Activated T-helper 1 cell treated with anti-CD3 and anti-CD28 coated beads, Interleukin-12 subunit alpha, Interleukin-12 subunit beta, Interleukin-2, Interleukin-4 antibody, amounts not matched to agents 30 ng/mL and 10 ng/mL and 1 ng/mL, durations not matched to agents 14 hours and 24 hours and 36 hours (primary cell): ENCODE measurements at regions of chr19 and their contacts with region 1.

Region 1: GRCh38 chr19:57410877-57411671 is at the start of gene ZNF17:
- DNase-seq: peak; percentile 87
- H3K4me3 Mint-ChIP-seq: peak within 1 kb of the TSS; percentile 95
- H3K27ac Mint-ChIP-seq: peak within 1 kb of the TSS; percentile 81
- H3K4me1 Mint-ChIP-seq: peaks cover 18% of the 10 kb centered on the region
- H3K27me3 Mint-ChIP-seq: no peaks in the 10 kb centered on the region
- total RNA-seq, gene ZNF17: 7.9 and 11.0 TPM in 2 replicates

Region 2: DNA sequence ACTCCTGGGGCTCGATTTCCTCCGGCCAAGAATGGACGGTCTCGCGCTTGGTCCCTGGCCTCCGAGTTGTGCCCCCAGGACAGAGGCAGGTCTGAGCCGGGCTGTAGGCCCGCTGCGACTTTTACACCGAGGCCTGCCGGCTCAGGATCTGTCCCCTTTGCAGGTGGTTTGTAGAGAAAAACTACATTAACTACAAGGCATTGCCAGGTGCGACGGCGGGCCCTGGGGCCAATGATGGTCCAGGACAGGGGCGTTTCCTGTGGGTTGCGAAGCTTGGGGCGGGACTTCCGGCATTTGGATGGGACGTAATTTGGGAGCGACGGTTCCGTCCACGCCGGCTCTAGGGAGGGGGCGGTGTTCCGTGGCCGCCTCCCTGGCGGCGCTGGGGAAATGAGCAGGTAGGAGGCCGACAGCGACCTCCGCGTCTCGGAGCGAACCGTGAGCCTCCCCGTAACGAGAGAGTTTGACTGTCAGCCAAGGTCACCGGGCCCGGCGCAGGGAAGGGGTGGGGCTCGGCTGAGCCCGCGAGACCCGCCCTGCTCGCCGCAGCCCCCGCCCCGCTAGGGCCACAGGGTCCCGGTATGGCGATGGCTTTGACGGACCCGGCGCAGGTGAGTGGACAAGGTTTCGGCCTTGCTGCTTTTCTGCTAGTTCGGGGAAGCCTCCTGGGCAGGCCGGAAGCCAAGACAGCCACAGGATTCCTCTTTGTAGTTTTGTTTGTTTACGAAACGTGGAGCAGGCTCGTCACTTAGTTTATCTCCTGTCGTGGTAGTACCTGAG is 170.6 kb before region 1 on chr19 and contains the start of gene ZNF805:
- intact Hi-C with region 1: loop called (anchors 1 kb)
- DNase-seq: peak; percentile 93
- H3K4me3 Mint-ChIP-seq: peak within 1 kb of the TSS; percentile 92
- H3K27ac Mint-ChIP-seq: peak within 1 kb of the TSS; percentile 97
- H3K4me1 Mint-ChIP-seq: peaks cover 14% of the 10 kb centered on the region
- H3K27me3 Mint-ChIP-seq: no peaks in the 10 kb centered on the region
- total RNA-seq, gene ZNF805: 6.9 and 8.4 TPM in 2 replicates

Region 3: GRCh38 chr19:57350877-57351805 is 59.9 kb before region 1 on chr19 and contains the start of gene ZNF304:
- intact Hi-C with region 1: loop called (anchors 1 kb)
- DNase-seq: peak; percentile 84
- H3K4me3 Mint-ChIP-seq: peak within 1 kb of the TSS; percentile 92
- H3K27ac Mint-ChIP-seq: peak within 1 kb of the TSS; percentile 90
- H3K4me1 Mint-ChIP-seq: peaks cover 29% of the 10 kb centered on the region
- H3K27me3 Mint-ChIP-seq: no peaks in the 10 kb centered on the region
- total RNA-seq, gene ZNF304: 6.1 and 6.6 TPM in 2 replicates

Region 4: GRCh38 chr19:57527136-57527881 is 116.2 kb after region 1 on chr19 and contains the start of gene ZNF549:
- intact Hi-C with region 1: loop called (anchors 1 kb)
- DNase-seq: peak; percentile 85
- H3K4me3 Mint-ChIP-seq: peak within 1 kb of the TSS; percentile 93
- H3K27ac Mint-ChIP-seq: peak within 1 kb of the TSS; percentile 76
- H3K4me1 Mint-ChIP-seq: peaks cover 20% of the 10 kb centered on the region
- H3K27me3 Mint-ChIP-seq: peaks cover 2% of the 10 kb centered on the region
- total RNA-seq, gene ZNF549: 3.6 and 4.2 TPM in 2 replicates

Region 5: DNA sequence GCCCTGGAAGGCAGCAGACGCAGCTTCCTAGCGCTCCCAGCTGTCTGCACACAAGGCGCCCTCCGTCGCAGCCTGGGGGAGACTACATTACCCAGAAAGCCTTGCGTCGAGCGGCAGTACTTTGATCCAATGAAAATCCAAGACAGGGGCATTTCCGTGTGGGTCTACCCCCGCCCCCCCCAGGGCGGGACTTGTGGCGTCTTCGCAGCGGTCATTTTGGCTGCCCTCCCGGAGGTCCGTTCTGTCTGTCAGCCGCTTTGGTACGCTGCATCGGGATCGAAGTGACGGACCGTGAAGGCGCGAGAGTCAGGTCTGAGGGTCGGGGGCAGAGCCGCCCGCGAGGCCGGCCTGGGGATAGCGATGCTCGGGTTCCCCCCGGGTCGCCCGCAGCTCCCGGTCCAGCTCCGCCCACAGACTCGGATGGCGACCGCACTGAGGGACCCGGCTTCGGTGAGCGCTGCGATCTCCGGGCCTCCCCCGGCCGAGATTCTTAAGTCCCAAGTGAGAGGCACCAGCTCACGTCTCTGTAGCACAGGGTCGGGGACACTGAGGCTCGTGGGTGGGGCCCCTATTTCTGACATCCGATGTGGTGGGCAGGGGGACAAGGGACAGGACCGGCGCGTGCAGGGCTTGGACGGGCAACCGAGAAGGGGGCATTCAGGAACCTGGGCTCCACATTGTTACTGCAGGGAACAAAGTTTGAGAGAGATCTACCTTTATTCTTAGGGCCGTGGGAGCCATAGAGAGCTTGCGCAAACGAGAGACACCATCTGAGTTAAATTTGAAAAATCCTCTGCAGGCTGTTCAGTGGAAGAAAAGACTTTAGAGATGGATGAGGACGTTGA is 222.1 kb after region 1 on chr19 and contains the start of gene ZNF211:
- intact Hi-C with region 1: loop called (anchors 1 kb)
- DNase-seq: peak; percentile 80
- H3K4me3 Mint-ChIP-seq: peak within 1 kb of the TSS; percentile 89
- H3K27ac Mint-ChIP-seq: peak within 1 kb of the TSS; percentile 78
- H3K4me1 Mint-ChIP-seq: peaks cover 19% of the 10 kb centered on the region
- H3K27me3 Mint-ChIP-seq: no peaks in the 10 kb centered on the region
- total RNA-seq, gene ZNF211: 8.3 and 8.4 TPM in 2 replicates

Region 6: GRCh38 chr19:57769345-57770131 is 358.5 kb after region 1 on chr19 and contains the start of gene ZNF586:
- intact Hi-C with region 1: loop called (anchors 1 kb)
- DNase-seq: peak; percentile 85
- H3K4me3 Mint-ChIP-seq: peak within 1 kb of the TSS; percentile 94
- H3K27ac Mint-ChIP-seq: peak within 1 kb of the TSS; percentile 89
- H3K4me1 Mint-ChIP-seq: peaks cover 24% of the 10 kb centered on the region
- H3K27me3 Mint-ChIP-seq: no peaks in the 10 kb centered on the region
- total RNA-seq, gene ZNF586: 13.6 and 13.8 TPM in 2 replicates

Region 7: DNA sequence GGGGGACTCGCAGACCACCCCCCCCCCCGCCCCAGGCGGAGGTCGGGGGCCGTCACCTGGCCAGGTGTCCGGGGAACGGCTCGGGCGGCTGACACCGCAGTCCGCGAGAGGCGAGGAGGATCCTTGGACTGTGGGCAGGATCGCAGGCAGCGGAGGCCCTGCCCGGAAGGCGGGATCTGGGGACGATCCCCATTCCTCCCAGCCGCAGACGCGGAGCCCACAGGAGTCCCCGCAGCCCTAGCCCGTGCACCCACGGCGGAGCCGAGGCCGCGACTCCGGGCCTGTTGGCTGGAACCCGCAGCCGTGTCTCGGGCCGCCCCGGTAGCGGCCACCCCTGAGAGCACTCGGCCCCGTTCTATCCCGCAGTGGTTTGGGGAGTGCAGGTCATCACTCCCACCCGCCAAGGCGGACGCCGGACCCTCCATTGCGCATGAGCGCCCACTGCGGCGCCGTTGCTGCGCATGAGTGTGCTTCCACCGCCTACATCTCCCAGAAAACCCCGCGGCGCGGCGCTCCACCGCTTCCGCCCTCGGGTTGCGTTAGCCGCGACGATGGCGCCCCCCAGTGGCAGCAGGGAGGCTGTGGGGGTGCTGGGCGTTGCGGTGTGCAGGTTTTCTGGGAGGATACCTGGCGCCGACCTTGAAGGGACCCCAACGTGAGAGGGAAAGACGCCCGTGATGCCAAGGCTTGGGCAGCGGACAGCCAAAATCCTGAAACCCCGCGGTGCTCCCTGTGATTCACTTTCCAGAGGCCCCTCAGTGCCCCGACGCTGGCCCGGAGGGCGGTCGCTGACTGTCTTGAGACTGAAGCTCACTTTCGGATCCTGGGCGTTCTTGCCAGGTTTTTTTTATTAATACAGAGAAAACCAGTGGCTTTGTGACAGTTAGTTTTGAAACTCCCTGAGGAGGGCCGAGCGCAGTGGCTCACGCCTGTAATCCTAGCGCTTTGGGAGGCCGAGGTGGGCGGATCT is 743.9 kb after region 1 on chr19:
- intact Hi-C with region 1: loop called (anchors 1 kb)
- DNase-seq: peak; percentile 89
- H3K4me3 Mint-ChIP-seq: peak overlapping the region; percentile 76
- H3K27ac Mint-ChIP-seq: peak overlapping the region; percentile 55
- H3K4me1 Mint-ChIP-seq: peaks cover 4% of the 10 kb centered on the region
- H3K27me3 Mint-ChIP-seq: no peaks in the 10 kb centered on the region